OCI-LY7 (cell line): ENCODE measurements at regions of chr5 and their contacts with region 1.

Region 1: GRCh38 chr5:176559683-176560082 is 10.5 kb downstream of the CDHR2 start:
- DNase-seq: peak; percentile 62
- H3K4me3 ChIP-seq: no peak overlapping the region
- H3K27ac ChIP-seq: no peak overlapping the region
- H3K4me1 ChIP-seq: peaks cover 6% of the 10 kb centered on the region
- CTCF ChIP-seq: peak; percentile 65

Region 2: GRCh38 chr5:176415952-176416924 is 143.4 kb before region 1 on chr5 and contains the start of gene CLTB:
- CTCF ChIA-PET with region 1: no interaction called
- POLR2A ChIA-PET with region 1: no interaction called
- intact Hi-C with region 1: loop called (anchors 1 kb)
- DNase-seq: peak; percentile 93
- H3K4me3 ChIP-seq: peak within 1 kb of the TSS; percentile 86
- H3K27ac ChIP-seq: peak within 1 kb of the TSS; percentile 2
- H3K4me1 ChIP-seq: peaks cover 21% of the 10 kb centered on the region
- CTCF ChIP-seq: peak; percentile 71
- total RNA-seq, gene CLTB: 53.4 and 69.2 TPM in 2 replicates

Region 3: DNA sequence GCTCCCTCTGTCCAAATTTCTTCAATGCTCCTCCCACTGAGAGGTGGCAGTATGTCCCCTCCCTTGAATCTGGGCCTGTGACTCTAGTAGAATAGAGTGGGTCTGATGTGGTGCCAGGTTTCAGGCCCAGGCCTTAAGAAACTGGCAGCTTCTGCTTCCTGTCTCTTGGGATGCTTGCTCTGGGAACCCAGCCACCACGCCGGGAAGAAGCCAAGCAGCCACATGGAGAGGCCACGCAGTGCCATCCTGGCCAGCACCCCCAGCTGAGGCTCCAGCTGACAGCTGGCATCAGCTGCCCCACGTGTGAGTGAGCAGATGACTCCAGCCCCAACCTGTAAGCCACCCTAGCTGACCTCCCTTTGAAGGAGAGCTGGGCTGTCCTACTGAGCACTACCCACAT is 80.3 kb after region 1 on chr5:
- CTCF ChIA-PET with region 1: no interaction called
- POLR2A ChIA-PET with region 1: no interaction called
- intact Hi-C with region 1: no loop called
- DNase-seq: no peak
- H3K4me3 ChIP-seq: no peak overlapping the region
- H3K27ac ChIP-seq: no peak overlapping the region
- H3K4me1 ChIP-seq: peaks cover 5% of the 10 kb centered on the region
- CTCF ChIP-seq: no peak